HEK293 (cell line): ENCODE measurements at regions of chr3 and their contacts with region 1.

Region 1: DNA sequence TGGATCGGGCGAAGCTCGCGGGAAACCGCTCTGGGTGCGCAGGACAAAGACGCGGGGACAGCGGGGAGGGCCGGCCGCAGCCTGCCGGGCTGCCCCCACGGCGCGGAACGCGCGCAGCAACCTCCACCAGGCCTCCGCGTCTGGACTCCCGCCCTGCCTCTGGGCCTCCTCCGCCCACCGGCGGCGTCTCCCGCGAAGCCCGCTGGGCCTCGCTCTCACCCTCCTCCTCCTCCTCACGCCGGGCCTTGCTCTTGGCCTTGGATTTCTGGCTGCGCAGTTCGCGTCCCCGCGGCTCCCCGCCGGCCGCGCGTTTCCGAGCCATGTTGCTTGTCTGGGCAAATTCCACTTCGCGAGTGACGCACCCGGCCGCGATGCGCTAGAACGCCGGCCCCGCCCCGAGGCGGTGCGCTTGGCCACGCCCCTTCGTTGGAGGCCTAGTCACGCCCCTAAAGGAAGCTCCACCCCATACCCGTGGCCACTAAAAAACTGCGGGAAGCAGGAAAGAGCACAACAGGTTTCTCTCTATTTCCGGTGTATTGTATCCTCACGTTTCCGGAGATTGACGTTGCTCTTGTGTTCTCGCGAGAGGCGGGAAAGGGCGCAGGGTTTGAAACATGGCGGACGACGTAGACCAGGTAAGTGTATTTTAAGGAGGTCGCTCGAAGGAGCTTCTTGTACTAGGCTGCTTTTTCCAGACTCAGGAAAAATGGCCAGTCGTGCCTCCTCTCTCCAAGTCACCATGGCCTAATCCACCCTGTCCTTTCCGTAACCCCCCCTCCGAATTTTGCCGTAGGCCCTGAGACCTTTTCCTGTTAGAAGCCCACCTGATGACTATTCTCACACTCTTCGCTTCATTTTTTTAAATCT is at the starts of genes LSM3 and XPC:
- H3K4me3 ChIP-seq: peak within 1 kb of the TSS; percentile 87
- H3K27ac ChIP-seq: peak within 1 kb of the TSS; percentile 79
- H3K4me1 ChIP-seq: peaks cover 7% of the 10 kb centered on the region; the same call in 1 of the 2 replicates
- CTCF ChIP-seq: no peak

Region 2: DNA sequence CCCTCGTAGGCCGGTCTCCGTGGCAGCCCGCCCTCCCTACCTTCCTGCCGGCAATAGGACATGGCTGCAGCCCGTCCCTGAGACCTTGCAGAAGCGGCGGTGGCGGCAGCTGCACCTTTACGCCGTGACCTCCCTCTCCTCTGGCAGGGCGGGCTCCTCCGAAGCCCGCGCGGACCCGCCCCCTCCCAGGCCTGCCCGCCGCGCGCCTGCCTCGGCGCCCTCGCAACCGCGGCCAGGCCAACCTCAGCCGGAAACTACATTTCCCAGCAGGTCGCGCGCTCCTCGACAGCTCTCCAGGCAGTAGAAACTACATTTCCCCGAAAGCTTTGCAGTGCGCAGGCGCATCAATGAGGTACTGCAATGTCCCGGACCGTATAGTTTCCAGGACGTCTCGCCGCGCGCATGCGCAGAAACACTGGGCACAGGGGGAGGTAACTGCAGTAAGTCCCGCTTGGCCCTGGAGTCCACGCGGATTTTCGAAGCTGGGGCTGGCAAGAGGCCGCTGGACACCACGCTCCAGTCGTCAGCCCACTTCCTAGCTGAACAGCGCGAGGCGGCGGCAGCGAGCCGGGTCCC is 53.8 kb before region 1 on chr3 and contains the starts of genes CHCHD4 and TMEM43:
- CTCF ChIA-PET with region 1: no interaction called
- POLR2A ChIA-PET with region 1: interaction called, 32 read pairs
- H3K4me3 ChIP-seq: peak within 1 kb of the TSS; percentile 73
- H3K27ac ChIP-seq: peak within 1 kb of the TSS; percentile 73
- H3K4me1 ChIP-seq: peaks cover 4% of the 10 kb centered on the region
- CTCF ChIP-seq: no peak

Region 3: GRCh38 chr3:14144423-14145075 is 33.9 kb before region 1 on chr3:
- CTCF ChIA-PET with region 1: interaction called, 3 read pairs
- POLR2A ChIA-PET with region 1: interaction called, 12 read pairs
- H3K4me3 ChIP-seq: no peak overlapping the region
- H3K27ac ChIP-seq: peak overlapping the region; percentile 42
- H3K4me1 ChIP-seq: peaks cover 11% of the 10 kb centered on the region
- CTCF ChIP-seq: no peak

Region 4: GRCh38 chr3:14166877-14167603 is 11.4 kb before region 1 on chr3:
- CTCF ChIA-PET with region 1: interaction called, 4 read pairs
- POLR2A ChIA-PET with region 1: interaction called, 11 read pairs
- H3K4me3 ChIP-seq: no peak overlapping the region
- H3K27ac ChIP-seq: no peak overlapping the region
- H3K4me1 ChIP-seq: no peaks in the 10 kb centered on the region
- CTCF ChIP-seq: no peak

Region 5: GRCh38 chr3:14651440-14652251 is 473.2 kb after region 1 on chr3 and contains the start of gene CCDC174:
- CTCF ChIA-PET with region 1: no interaction called
- POLR2A ChIA-PET with region 1: interaction called, 14 read pairs
- H3K4me3 ChIP-seq: peak within 1 kb of the TSS; percentile 93
- H3K27ac ChIP-seq: peak within 1 kb of the TSS; percentile 39
- H3K4me1 ChIP-seq: peaks cover 5% of the 10 kb centered on the region
- CTCF ChIP-seq: no peak; the same call in 1 of the 2 replicates